IMR-90 (cell line): ENCODE measurements at regions of chr10 and their contacts with region 1.

Region 1: GRCh38 chr10:98391578-98391991 is 23.4 kb downstream of the PYROXD2 start:
- DNase-seq: peak; percentile 49
- ATAC-seq: peak; percentile 28; the same call in 1 of the 2 replicates
- H3K4me3 ChIP-seq: no peak overlapping the region
- H3K27ac ChIP-seq: no peak overlapping the region
- H3K4me1 ChIP-seq: peaks cover 5% of the 10 kb centered on the region; the same call in 1 of the 2 replicates
- H3K27me3 ChIP-seq: no peaks in the 10 kb centered on the region
- CTCF ChIP-seq: no peak
- POLR2A ChIP-seq: no peak
- RAD21 ChIP-seq: no peak

Region 2: DNA sequence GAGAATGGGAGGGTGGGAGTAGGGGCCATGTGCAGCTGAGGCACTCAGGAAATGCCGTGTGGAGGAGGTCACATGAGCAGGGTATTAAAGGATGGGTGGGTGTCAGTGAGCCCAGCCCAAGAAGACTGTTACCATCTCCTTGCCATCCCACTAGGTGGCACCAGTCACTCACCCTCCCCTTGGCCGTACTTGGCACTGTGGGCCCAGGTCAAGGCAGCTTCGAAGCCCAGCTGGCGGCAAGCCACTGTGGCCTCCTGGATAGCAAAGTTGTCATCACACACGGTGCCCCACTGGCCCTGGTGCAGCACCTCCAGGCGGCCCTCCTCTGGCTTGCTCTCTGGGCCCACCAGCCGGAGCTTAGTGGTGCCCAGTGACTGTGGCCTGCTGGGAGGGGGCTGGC is 129.0 kb before region 1 on chr10:
- CTCF ChIA-PET with region 1: interaction called, 3 read pairs
- POLR2A ChIA-PET with region 1: no interaction called
- dilution Hi-C with region 1: no loop called
- in situ Hi-C with region 1: no loop called
- intact Hi-C with region 1: loop called (anchors 1 kb)
- DNase-seq: peak; percentile 36
- ATAC-seq: peak; percentile 43; the same call in 1 of the 2 replicates
- H3K4me3 ChIP-seq: no peak overlapping the region
- H3K27ac ChIP-seq: no peak overlapping the region
- H3K4me1 ChIP-seq: peaks cover 12% of the 10 kb centered on the region
- H3K27me3 ChIP-seq: no peaks in the 10 kb centered on the region
- CTCF ChIP-seq: peak; percentile 51
- POLR2A ChIP-seq: no peak
- RAD21 ChIP-seq: peak; percentile 68